ENCODE measurements at regions of chr2 and their contacts with region 1.

Region 1: DNA sequence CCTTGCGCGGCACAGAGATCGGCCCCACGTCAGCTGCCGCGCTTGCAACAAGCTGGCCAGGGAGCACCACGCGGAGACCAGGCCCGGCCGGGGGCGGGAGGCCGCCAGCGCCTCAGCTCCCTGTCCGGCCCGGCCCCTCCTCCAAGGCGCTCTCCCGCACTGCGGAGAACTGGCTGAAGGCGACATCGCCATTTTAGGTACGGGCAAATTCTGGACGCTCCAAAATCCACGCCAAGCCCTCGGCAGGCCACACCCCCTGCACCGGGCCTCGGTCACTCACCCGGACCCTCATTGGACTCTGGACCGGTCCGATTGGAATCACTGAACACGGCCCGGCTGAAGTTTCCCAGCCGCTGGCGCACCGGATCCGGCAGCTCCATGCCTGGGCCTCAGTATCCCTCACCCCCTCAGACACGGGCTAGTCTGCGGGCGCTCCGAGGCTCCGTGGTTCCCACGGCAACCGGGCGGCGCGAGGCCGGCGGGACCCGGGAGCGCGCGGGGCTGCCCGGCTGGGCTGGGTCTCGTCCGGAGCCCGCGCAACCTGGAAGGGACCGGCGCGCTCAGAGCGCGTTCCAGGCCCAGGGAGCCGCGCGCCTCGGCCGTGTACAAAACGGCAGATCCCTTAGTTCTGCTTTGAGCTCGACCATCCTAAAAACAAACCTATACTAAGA is at the start of gene TMEM17:
- DNase-seq: peak; percentile 89
- ATAC-seq: peak; percentile 91
- H3K4me3 ChIP-seq: peak within 1 kb of the TSS; percentile 54
- H3K27ac ChIP-seq: peak within 1 kb of the TSS; percentile 78
- H3K4me1 ChIP-seq: no peaks in the 10 kb centered on the region; the same call in 1 of the 2 replicates
- H3K27me3 ChIP-seq: no peaks in the 10 kb centered on the region
- CTCF ChIP-seq: no peak
- POLR2A ChIP-seq: 0 out of 2 replicates have a peak, but pooled peaks have one; percentile 24
- RAD21 ChIP-seq: no peak
- total RNA-seq, gene TMEM17: 1.3 and 2.2 TPM in 2 replicates

Region 2: GRCh38 chr2:62705007-62705829 is 199.3 kb after region 1 on chr2 and contains the start of gene EHBP1:
- CTCF ChIA-PET with region 1: no interaction called
- POLR2A ChIA-PET with region 1: no interaction called
- dilution Hi-C with region 1: no loop called
- in situ Hi-C with region 1: no loop called
- intact Hi-C with region 1: loop called (anchors 5 kb)
- DNase-seq: peak; percentile 100
- ATAC-seq: peak; percentile 96
- H3K4me3 ChIP-seq: peak within 1 kb of the TSS; percentile 83
- H3K27ac ChIP-seq: peak within 1 kb of the TSS; percentile 84
- H3K4me1 ChIP-seq: peaks cover 4% of the 10 kb centered on the region; the same call in 1 of the 2 replicates
- H3K27me3 ChIP-seq: no peaks in the 10 kb centered on the region
- CTCF ChIP-seq: no peak
- POLR2A ChIP-seq: 0 out of 2 replicates have a peak, but pooled peaks have one; percentile 37
- RAD21 ChIP-seq: no peak; the same call in 1 of the 2 replicates
- total RNA-seq, gene EHBP1: 44.4 and 55.0 TPM in 2 replicates

Measured in IMR-90 (cell line).